ENCODE measurements at regions of chr1 and their contacts with region 1.

Region 1: DNA sequence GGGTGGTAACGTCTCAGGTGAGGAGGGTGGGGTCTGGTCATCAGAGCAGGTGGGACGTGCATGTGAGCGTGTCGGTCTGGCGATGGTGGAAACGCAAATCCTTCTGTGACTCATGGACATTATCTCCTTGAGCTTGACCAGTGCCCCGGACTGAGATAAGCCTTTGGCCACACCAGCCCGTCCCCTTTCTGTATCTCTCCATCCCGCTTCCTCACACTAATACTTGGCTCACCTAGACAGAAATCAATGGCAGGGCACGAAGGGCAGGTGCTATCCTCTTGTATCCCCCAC is 7.9 kb upstream of the AQP10 start:
- DNase-seq: no peak
- H3K4me3 ChIP-seq: no peak overlapping the region
- H3K27ac ChIP-seq: no peak overlapping the region
- H3K4me1 ChIP-seq: no peaks in the 10 kb centered on the region
- H3K27me3 ChIP-seq: no peaks in the 10 kb centered on the region
- CTCF ChIP-seq: no peak
- EP300 ChIP-seq: no peak
- POLR2A ChIP-seq: no peak

Region 2: GRCh38 chr1:154104433-154105082 is 208.5 kb before region 1 on chr1:
- intact Hi-C with region 1: no loop called
- DNase-seq: no peak
- H3K4me3 ChIP-seq: no peak overlapping the region
- H3K27ac ChIP-seq: no peak overlapping the region
- H3K4me1 ChIP-seq: no peaks in the 10 kb centered on the region
- H3K27me3 ChIP-seq: no peaks in the 10 kb centered on the region
- CTCF ChIP-seq: no peak
- EP300 ChIP-seq: no peak
- POLR2A ChIP-seq: no peak

Region 3: GRCh38 chr1:154342836-154343472 is 29.9 kb after region 1 on chr1:
- intact Hi-C with region 1: loop called (anchors 2 kb)
- DNase-seq: no peak
- H3K4me3 ChIP-seq: no peak overlapping the region
- H3K27ac ChIP-seq: no peak overlapping the region
- H3K4me1 ChIP-seq: peaks cover 0 to 6% (median 3%) of the 10 kb centered on the region in 4 donors
- H3K27me3 ChIP-seq: no peaks in the 10 kb centered on the region
- CTCF ChIP-seq: no peak
- EP300 ChIP-seq: no peak
- POLR2A ChIP-seq: no peak